Left lung (tissue), 14 donors: ENCODE measurements at regions of chr6 and their contacts with region 1.

Region 1: DNA sequence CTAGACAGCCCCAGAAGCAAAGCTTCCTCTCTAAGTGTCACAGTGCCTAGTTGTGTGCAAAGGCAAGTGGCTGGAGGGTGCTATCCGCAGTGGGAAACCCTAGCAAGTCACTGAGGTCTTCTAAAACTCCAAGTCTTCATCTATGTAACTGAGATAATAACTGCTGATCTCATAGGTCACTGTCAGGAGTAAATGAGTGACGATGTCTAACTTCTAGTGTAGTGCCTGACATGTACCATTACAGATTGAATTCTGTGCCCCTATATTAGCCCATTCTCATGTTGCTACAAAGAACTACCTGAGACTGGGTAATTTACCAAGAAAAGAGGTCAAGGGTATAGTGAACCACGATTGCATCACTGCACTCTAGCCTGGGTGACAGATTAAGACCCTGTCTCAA is 253.5 kb upstream of the JARID2 start:
- DNase-seq: no peak
- ATAC-seq: no peak
- H3K4me3 ChIP-seq: no peak overlapping the region
- H3K27ac ChIP-seq: no peak overlapping the region
- H3K4me1 ChIP-seq: no peaks in the 10 kb centered on the region
- H3K27me3 ChIP-seq: no peaks in the 10 kb centered on the region
- CTCF ChIP-seq: no peak

Region 2: DNA sequence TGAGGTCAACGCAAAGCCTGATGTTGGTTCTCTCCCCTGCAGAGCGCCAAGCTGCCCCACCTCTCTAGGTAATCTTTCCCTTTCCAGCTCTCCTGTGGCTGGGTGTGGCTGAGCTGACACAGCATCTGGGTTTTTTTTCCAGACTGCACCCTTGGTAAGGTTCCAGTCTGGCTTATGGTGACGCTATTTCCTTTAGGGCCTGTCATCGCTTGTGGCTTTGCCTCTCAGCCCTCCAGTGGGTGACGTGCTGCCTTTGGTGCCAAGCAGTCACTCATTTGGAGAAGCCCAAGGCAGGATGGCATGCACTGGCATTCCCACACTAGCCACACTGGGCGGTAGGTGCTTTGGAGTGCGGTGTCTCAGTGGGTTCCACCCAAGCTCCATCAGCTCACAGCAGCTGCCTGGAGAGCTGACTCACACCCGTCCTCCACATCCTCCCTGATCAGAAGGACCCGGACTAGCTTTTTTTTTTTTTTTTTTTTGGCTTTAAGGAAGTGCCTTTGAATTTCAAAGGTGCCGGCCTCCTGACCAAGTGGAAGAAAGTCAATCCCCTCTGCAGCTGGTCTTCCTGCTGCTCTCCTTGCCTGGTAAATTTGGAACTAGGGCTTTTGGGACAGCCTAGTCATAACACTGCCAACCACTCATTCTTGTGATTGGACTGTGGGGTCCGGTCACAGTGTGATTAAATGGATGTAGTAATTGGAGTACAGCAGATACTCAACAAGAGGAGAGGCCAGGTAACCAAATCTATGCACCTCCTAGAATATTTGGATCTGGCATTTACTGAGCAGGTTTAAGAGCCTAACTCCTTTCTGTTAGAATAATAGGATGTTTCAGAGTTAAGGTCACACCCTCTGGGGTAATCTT is 721.2 kb before region 1 on chr6:
- intact Hi-C with region 1: no loop called
- DNase-seq: peak in 1 of 4 donors; percentile 62
- ATAC-seq: peak; percentile 82
- H3K4me3 ChIP-seq: no peak overlapping the region
- H3K27ac ChIP-seq: no peak overlapping the region
- H3K4me1 ChIP-seq: peaks cover 4 to 31% of the 10 kb centered on the region in 2 donors
- H3K27me3 ChIP-seq: no peaks in the 10 kb centered on the region
- CTCF ChIP-seq: no peak

Region 3: DNA sequence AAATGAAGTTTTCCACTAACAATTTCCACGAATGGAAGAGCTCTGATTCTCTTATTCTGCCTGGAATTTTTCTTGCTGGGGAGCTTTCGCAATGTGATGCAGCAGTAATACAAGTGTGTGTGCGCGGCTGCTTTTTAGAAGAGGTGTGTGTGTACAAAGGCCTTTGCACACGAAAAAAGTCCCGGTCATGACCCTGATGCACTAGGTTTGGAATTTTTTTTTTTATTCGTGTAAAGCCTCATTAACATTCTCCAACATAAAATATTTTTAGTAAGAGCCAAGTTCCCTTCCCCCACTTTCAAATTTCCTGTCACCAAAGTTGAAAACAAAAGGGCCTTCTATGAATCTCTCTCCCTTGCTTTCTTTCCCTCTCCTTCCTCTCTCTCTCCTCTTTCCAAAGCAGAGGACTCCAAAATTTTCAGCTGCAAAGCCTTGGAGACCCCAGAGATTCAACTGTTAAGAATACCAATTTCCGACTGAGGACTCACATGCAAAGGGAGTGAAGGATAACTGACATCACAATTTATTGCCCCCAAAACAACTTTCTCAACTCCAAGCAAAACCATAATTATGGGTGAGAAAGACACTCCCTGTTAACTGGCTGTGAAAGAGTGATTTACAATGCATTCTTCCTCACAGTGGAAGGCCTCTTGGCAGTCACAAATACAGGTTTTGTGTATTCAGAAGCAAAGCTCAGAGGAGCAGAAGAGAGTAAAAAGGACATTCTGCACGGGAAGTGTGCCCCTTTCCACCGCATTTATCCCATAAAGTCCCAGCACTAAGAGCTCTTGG is 167.7 kb before region 1 on chr6:
- intact Hi-C with region 1: no loop called
- DNase-seq: no peak
- ATAC-seq: no peak
- H3K4me3 ChIP-seq: no peak overlapping the region
- H3K27ac ChIP-seq: no peak overlapping the region
- H3K4me1 ChIP-seq: peaks cover 0 to 19% of the 10 kb centered on the region in 2 donors
- H3K27me3 ChIP-seq: no peaks in the 10 kb centered on the region
- CTCF ChIP-seq: no peak

Region 4: GRCh38 chr6:15062516-15063252 is 70.3 kb after region 1 on chr6:
- intact Hi-C with region 1: no loop called
- DNase-seq: no peak
- ATAC-seq: no peak
- H3K4me3 ChIP-seq: no peak overlapping the region
- H3K27ac ChIP-seq: peak overlapping the region in 1 of 2 donors; percentile 63
- H3K4me1 ChIP-seq: peaks cover 0 to 41% of the 10 kb centered on the region in 2 donors
- H3K27me3 ChIP-seq: no peaks in the 10 kb centered on the region
- CTCF ChIP-seq: no peak

Region 5: GRCh38 chr6:15077964-15078363 is 85.6 kb after region 1 on chr6:
- intact Hi-C with region 1: no loop called
- DNase-seq: no peak
- ATAC-seq: no peak
- H3K4me3 ChIP-seq: no peak overlapping the region
- H3K27ac ChIP-seq: no peak overlapping the region
- H3K4me1 ChIP-seq: no peaks in the 10 kb centered on the region
- H3K27me3 ChIP-seq: no peaks in the 10 kb centered on the region
- CTCF ChIP-seq: no peak

Region 6: GRCh38 chr6:15429141-15430110 is 437.0 kb after region 1 on chr6:
- intact Hi-C with region 1: loop called in 1 of 2 experiments (anchors 5 kb)
- DNase-seq: no peak
- ATAC-seq: no peak
- H3K4me3 ChIP-seq: no peak overlapping the region
- H3K27ac ChIP-seq: peak overlapping the region in 1 of 2 donors; percentile 34
- H3K4me1 ChIP-seq: peaks cover 37 to 84% of the 10 kb centered on the region in 2 donors
- H3K27me3 ChIP-seq: no peaks in the 10 kb centered on the region
- CTCF ChIP-seq: no peak